Activated CD8-positive, alpha-beta T cell treated with anti-CD3 and anti-CD28 coated beads, Interleukin-2, amount 10 ng/mL, durations not matched to agents 7 days and 5 days (primary cell): ENCODE measurements at regions of chr6 and their contacts with region 1.

Region 1: DNA sequence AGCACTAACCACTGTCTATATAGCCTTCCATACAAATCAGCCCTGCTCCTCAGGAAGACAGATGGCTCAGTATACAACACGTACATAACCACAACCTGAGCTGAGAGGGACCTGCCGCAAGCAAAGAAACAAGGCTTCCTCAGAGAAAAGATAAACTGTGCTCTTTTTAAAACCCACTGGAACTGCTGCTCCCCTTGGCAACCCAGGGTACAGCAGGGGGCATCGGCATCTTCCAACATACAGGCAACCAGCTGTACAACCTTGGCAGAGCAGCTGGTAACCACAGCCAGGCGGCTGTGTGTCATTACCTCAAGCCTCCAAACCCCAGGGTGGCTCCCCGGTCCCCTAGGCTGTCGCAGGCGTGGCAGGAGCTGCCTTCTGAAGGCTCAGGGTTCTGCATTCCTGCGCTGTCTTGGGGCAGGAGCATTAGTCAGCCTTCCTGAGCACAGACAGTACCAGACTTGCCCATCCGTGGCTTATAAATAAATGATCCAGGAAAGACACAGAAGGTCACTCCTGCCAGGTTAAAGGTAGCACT is 249.5 kb downstream of the ADGRG6 start:
- DNase-seq: peak; percentile 74
- ATAC-seq: peak; percentile 96
- H3K4me3 Mint-ChIP-seq: peak overlapping the region; percentile 23
- H3K27ac Mint-ChIP-seq: peak overlapping the region; percentile 76
- H3K4me1 Mint-ChIP-seq: peaks cover 34% of the 10 kb centered on the region
- H3K27me3 Mint-ChIP-seq: no peaks in the 10 kb centered on the region

Region 2: DNA sequence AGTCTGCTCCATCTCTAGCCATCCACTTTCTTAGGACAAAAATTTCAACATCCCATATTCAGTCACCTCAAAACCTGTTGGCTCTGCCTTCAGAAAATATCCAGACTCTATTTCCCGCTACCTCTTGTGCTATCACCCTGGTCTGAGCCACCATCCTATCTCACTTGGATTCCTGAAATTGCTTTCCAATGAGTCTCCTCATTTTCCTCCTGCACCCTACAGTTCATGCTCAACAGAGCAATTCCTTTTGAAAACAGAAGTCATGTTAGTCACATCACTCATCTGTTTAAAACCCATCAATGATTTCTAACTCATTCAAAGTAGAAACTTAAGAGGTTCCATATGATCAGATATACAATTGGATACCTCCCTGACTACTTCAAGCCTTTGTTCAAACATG is 19.6 kb before region 1 on chr6:
- CTCF ChIA-PET with region 1: no interaction called
- POLR2A ChIA-PET with region 1: no interaction called
- DNase-seq: no peak
- ATAC-seq: no peak
- H3K4me3 Mint-ChIP-seq: no peak overlapping the region
- H3K27ac Mint-ChIP-seq: no peak overlapping the region
- H3K4me1 Mint-ChIP-seq: no peaks in the 10 kb centered on the region
- H3K27me3 Mint-ChIP-seq: no peaks in the 10 kb centered on the region

Region 3: DNA sequence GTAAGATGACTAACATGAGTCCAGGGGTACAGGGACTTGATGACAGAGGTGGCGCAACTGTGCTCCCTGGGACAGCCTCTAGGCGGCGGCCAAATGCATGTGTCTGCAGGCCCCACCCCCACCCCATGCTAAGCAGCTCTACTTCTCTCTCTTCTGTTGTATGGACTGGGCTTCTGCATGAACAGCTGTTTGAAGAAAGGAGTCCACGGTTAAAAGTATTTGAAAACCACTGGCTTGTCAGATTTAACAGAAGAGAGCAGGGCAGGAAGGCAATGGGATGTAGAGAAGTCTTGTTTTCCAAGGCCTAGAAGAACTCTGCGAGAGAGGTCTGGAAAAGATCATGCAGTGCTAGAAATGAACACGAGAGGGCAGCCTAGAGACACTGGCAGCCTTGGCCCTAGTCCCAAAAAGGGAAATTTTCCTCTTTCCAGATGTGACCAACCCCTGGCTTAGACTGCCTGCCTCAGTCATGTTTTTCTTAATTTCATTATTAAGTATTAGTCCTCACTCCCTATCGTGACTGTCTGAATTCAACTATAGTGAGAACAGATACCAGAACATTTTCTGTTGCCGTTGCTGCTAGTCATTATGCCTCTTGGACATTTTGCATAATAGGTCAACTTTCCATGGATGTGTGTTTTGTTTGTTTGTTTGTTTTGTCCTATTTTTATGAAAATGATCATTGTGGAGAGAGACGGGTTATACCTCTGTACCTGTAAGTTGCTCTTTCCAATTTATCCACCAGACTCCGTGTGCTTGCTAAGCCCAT is 15.5 kb after region 1 on chr6:
- CTCF ChIA-PET with region 1: interaction called, 15 read pairs
- POLR2A ChIA-PET with region 1: interaction called, 3 read pairs
- DNase-seq: peak; percentile 63
- ATAC-seq: peak; percentile 55
- H3K4me3 Mint-ChIP-seq: no peak overlapping the region
- H3K27ac Mint-ChIP-seq: no peak overlapping the region
- H3K4me1 Mint-ChIP-seq: peaks cover 37% of the 10 kb centered on the region
- H3K27me3 Mint-ChIP-seq: no peaks in the 10 kb centered on the region